WTC11 (cell line): ENCODE measurements at regions of chr9 and their contacts with region 1.

Region 1: DNA sequence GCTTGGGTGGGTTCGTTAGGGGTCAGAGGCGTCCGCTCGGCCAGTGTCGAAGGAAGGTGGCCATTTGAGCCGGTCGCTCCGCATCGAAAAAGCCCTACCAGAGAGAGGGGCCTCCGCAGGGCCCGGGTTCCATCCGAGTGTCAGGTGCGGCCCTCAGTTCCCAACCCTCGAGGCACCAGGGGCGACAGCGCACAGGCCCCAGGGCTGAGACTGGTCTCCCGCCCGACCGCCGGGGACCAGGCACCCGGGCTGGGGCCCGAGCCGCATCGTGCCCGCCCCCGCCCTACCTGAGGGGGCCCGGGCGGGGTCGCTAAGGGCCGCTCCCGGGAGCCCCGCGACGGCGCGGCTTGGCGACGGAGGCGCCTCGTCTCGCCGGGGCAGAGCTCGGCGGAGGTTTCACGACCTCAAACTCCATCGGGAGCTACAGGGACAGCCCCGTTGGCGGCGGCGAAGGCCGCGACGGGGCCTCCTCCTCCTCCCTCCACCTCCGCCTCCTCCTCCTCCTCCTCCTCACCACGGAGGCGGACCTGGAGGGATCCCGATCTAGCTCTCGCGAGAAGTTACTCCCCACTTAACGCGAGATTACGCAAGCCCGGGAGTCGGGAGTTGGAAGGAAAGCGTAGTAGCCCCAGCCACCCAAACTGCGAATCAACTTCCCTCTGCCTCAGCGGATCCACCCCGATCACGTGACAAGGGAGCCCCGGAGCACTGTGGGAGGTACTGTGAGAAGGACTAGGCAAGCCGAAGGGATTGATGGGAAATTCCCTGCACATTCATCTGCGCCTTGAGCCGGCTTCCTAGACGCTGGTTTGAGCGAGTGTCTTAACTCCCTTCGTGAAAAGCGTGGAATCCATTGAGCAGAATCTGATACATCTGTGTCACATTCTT is at the start of gene RC3H2:
- DNase-seq: peak; percentile 96
- ATAC-seq: peak; percentile 96
- H3K4me3 Mint-ChIP-seq: peak within 1 kb of the TSS; percentile 85
- H3K27ac Mint-ChIP-seq: peak within 1 kb of the TSS; percentile 100
- H3K4me1 Mint-ChIP-seq: peaks cover 14% of the 10 kb centered on the region
- H3K27me3 Mint-ChIP-seq: no peaks in the 10 kb centered on the region
- CTCF ChIP-seq: no peak
- total RNA-seq, gene RC3H2: 36.0 to 38.3 TPM (median 37.5 TPM) in 3 replicates

Region 2: DNA sequence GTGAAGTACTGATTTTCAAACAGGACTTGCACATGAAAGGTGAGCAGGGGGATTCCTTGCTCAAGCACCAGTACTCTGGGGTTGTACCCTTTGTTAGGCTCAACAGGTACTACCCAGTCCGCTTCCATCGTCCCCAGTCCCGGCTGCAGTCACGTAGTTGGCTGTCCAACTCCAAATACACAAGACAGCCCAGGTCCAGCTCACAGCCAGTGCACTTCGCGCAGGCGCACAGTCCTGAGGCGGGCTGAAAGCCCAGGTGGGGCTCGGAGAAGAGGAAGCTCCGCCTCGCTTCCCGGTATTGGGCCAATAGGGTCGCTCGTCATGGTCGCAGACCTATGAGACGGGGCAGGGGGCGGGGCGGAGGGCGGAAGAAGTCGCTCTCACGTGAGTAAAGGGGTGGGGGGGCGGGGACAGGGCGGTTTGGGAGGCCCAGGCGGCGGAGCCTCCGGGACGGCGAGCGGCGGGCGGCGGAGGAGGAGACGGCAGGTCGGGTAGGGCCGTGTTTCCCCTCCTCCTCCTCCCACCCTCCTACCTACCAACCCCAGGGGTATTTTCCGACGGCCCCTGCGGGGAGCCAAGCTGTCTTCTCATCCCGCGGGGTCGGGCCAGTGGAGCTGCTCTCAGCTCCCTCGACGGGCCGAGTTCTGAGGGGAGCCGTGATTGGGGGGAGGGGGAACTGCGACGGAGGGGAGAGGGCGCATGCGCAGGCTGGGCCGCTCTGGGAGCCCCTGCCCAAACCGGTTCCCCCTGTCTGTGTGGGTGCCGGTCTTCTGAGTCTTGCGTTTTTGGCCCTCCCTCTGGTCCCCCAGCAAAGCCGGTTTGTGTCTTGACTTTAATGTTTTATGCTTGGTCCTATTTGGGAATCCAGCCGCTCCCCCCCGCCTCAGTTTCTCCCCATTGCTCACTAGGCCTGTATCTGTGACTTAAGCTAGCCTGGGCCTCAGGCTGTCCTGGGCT is 35.8 kb after region 1 on chr9 and contains the start of gene RABGAP1:
- CTCF ChIA-PET with region 1: no interaction called
- POLR2A ChIA-PET with region 1: interaction called, 11 read pairs
- DNase-seq: peak; percentile 100
- ATAC-seq: peak; percentile 99
- H3K4me3 Mint-ChIP-seq: peak within 1 kb of the TSS; percentile 92
- H3K27ac Mint-ChIP-seq: peak within 1 kb of the TSS; percentile 99
- H3K4me1 Mint-ChIP-seq: peaks cover 21% of the 10 kb centered on the region
- H3K27me3 Mint-ChIP-seq: no peaks in the 10 kb centered on the region; the same call in 1 of the 2 replicates
- CTCF ChIP-seq: no peak
- total RNA-seq, gene RABGAP1: 38.1 to 42.9 TPM (median 41.1 TPM) in 3 replicates

Region 3: GRCh38 chr9:123000371-123001068 is 95.5 kb after region 1 on chr9:
- CTCF ChIA-PET with region 1: no interaction called
- POLR2A ChIA-PET with region 1: no interaction called
- DNase-seq: no peak
- ATAC-seq: peak; percentile 71
- H3K4me3 Mint-ChIP-seq: peak overlapping the region; percentile 51
- H3K27ac Mint-ChIP-seq: peak overlapping the region; percentile 94
- H3K4me1 Mint-ChIP-seq: peaks cover 39% of the 10 kb centered on the region
- H3K27me3 Mint-ChIP-seq: no peaks in the 10 kb centered on the region
- CTCF ChIP-seq: no peak

Region 4: DNA sequence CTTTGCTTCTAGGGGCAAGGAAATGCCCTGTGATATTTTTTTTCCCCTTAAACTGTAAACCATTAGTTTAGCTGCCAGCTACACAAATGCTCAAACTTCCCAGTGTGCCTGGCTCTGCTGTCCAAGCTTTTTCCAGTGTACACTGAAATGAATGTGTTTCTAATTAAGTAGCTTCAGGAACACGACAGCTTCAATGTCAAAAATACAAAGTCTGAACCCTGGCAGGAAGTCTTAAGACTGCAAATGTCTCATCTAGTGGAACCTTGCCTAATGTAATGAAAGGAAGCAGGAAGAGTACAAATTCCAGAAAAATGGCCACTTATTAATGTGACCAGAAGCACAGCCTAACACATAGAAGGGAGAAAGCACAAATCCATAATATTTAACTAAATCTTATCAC is 706.2 kb after region 1 on chr9:
- CTCF ChIA-PET with region 1: no interaction called
- POLR2A ChIA-PET with region 1: no interaction called
- DNase-seq: no peak
- ATAC-seq: no peak
- H3K4me3 Mint-ChIP-seq: no peak overlapping the region
- H3K27ac Mint-ChIP-seq: no peak overlapping the region
- H3K4me1 Mint-ChIP-seq: peaks cover 14% of the 10 kb centered on the region
- H3K27me3 Mint-ChIP-seq: peaks cover 19% of the 10 kb centered on the region
- CTCF ChIP-seq: no peak